Esophagus muscularis mucosa (tissue), 4 donors: ENCODE measurements at regions of chr7 and their contacts with region 1.

Region 1: GRCh38 chr7:114554781-114555537 is 140.3 kb downstream of the FOXP2 start:
- DNase-seq: no peak
- H3K4me3 ChIP-seq: no peak overlapping the region
- H3K27ac ChIP-seq: no peak overlapping the region
- H3K4me1 ChIP-seq: peaks cover 0 to 5% (median 2%) of the 10 kb centered on the region in 4 donors
- H3K27me3 ChIP-seq: no peaks in the 10 kb centered on the region
- CTCF ChIP-seq: no peak
- EP300 ChIP-seq: no peak
- POLR2A ChIP-seq: no peak

Region 2: DNA sequence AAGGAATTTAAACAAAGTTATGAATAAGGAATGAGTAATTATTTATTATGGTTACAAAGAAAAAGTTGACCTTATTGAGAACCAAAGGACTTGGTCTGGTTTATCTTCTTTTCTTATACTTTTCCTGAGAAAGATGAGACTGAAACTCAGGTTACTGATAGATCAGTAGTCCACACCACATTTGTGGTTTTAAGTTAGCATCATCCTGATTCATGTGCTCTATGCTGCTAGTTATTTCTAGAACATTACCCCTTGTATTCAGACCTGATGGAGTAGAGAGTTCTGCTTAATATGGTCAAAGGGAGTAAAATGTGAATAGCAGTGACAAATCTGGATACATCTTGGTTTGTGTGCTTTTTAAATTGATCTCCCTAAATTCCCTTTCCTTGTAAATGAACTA is 76.6 kb before region 1 on chr7:
- intact Hi-C with region 1: no loop called
- DNase-seq: no peak
- H3K4me3 ChIP-seq: no peak overlapping the region
- H3K27ac ChIP-seq: no peak overlapping the region
- H3K4me1 ChIP-seq: peaks cover 0 to 20% (median 5%) of the 10 kb centered on the region in 4 donors
- H3K27me3 ChIP-seq: no peaks in the 10 kb centered on the region
- CTCF ChIP-seq: no peak
- EP300 ChIP-seq: no peak
- POLR2A ChIP-seq: no peak

Region 3: GRCh38 chr7:114916261-114916892 is 361.4 kb after region 1 on chr7:
- intact Hi-C with region 1: loop called (anchors 10 kb)
- DNase-seq: no peak
- H3K4me3 ChIP-seq: no peak overlapping the region
- H3K27ac ChIP-seq: no peak overlapping the region
- H3K4me1 ChIP-seq: peaks cover 0 to 2% (median 0%) of the 10 kb centered on the region in 4 donors
- H3K27me3 ChIP-seq: no peaks in the 10 kb centered on the region
- CTCF ChIP-seq: no peak
- EP300 ChIP-seq: no peak
- POLR2A ChIP-seq: no peak